ENCODE measurements at regions of chr10 and their contacts with region 1.

Region 1: DNA sequence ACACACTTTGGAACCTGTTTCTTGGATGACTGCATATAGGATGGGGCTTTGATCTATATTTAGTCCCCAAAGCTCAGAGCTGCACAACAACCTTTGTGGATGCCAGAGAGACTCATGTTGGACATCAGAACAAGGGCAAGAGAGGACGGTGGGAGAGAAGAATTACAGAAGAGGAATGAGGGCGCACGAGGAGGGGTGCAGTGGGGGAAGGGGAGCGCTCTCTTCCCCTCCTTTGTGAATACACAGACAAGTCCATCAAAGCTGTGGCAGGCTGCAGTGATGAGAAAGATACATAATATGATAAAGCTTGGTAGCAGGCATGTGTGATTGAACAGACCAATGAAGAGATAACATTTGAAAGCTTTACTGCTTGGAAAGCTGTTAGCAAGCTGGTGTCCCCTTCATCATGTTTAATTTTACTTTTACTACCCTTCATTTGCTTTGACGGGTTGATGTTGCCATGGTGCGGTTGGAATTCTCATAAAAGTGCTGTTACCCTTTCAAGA is 857.8 kb downstream of the KCNMA1 start:
- DNase-seq: no peak
- H3K4me3 ChIP-seq: no peak overlapping the region
- CTCF ChIP-seq: no peak

Region 2: DNA sequence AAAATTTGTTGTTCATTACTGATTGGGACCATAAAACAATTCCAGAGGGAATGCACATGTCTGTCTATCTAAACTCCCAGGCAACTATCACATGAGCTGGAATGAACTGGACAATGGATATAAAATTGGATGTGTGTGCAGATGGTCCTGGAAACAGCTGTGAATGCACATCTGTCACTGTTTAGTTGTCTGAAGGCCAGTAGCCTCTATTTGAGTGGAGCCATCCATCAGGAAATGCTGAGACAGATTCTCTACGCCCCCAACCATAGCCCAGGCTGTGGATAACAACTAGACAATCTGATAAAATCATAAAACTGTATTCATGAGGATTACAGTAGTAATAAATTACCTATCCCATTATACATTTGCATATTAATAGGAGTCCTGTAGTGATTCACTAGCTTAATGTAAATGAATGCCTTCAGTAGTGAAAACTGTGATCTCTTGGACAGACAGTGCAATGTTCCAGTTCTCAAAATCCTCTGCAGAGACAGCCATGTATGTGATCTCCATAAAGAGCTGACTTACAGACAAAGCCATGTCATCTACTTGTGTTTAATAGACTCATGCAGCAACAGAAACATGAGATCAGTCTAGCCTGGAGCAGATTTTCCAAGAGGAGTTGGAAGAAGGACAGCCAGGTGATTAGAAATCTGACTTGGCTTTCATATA is 49.9 kb before region 1 on chr10:
- in situ Hi-C with region 1: no loop called
- DNase-seq: no peak
- H3K4me3 ChIP-seq: no peak overlapping the region
- CTCF ChIP-seq: no peak

Region 3: DNA sequence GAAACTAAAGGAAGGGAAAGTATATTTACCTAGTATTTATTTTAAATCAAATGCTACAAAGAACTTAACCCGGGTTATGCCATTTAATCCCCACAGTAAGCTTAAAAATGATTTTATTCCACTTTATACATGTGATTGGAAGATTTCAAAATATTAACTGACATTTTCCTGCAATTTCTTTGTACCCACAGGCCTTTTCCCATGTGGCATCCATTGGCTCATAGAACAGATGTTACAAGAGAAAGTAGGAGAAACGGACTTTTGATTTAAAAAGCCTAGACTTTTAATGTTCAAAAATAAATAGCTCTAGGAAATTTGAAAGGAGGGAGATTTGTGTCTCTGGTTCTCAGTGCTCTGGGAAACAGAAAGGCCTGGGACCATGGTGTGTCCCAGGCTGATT is 49.9 kb after region 1 on chr10:
- in situ Hi-C with region 1: loop called (anchors 5 kb)
- DNase-seq: no peak
- H3K4me3 ChIP-seq: no peak overlapping the region
- CTCF ChIP-seq: no peak

Measured in astrocyte of the cerebellum (primary cell).